ENCODE measurements at regions of chr1 and their contacts with region 1.

Region 1: GRCh38 chr1:178282949-178283367 is 189.1 kb downstream of the RASAL2 start:
- DNase-seq: no peak
- H3K4me3 Mint-ChIP-seq: no peak overlapping the region
- H3K27ac Mint-ChIP-seq: no peak overlapping the region
- H3K4me1 Mint-ChIP-seq: peaks cover 2% of the 10 kb centered on the region
- H3K27me3 Mint-ChIP-seq: no peaks in the 10 kb centered on the region

Region 2: DNA sequence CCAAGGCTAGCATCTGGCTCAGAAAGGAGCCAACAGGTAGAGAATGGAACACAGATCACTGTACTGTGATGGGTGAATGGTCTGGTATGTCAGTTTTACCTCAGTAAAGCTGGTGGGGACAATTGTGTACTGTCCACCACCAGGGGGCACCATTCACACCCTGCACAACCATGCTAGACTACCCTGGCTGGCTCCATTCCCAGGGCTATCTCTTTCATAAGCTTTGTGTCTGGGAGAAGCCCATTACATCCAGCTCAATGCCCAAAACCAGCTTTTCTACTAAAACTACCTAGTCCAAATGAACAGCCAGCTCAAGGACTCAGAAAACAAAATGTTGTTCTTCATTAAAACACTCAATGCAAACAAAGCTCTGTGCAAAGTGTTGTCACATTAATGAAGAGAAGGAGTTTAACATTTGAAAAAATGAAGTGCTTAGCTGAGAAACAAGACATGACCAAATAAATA is 251.1 kb before region 1 on chr1:
- intact Hi-C with region 1: loop called (anchors 10 kb)
- DNase-seq: no peak
- H3K4me3 Mint-ChIP-seq: no peak overlapping the region
- H3K27ac Mint-ChIP-seq: no peak overlapping the region
- H3K4me1 Mint-ChIP-seq: no peaks in the 10 kb centered on the region
- H3K27me3 Mint-ChIP-seq: peaks cover 2% of the 10 kb centered on the region

Measured in activated T-helper 2 cell treated with anti-CD3 and anti-CD28 coated beads, Interferon-gamma antibody, Interleukin-2, Interleukin-4, amounts not matched to agents 10 μg/mL and 5 μg/mL and 100 μg/mL, durations not matched to agents 14 hours and 24 hours and 36 hours (primary cell).